ENCODE measurements at regions of chr19 and their contacts with region 1.

Region 1: DNA sequence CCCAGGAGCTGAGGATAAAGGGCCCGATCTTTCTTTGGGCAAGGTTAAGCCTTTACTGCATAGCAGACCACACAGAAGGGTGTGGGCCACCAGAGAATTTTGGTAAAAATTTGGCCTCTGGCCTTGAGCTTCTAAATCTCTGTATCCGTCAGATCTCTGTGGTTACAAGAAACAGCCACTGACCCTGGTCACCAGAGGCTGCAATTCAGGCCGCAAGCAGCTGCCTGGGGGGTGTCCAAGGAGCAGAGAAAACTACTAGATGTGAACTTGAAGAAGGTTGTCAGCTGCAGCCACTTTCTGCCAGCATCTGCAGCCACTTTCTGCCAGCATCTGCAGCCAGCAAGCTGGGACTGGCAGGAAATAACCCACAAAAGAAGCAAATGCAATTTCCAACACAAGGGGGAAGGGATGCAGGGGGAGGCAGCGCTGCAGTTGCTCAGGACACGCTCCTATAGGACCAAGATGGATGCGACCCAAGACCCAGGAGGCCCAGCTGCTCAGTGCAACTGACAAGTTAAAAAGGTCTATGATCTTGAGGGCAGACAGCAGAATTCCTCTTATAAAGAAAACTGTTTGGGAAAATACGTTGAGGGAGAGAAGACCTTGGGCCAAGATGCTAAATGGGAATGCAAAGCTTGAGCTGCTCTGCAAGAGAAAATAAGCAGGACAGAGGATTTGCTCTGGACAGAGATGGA is 8.4 kb upstream of the CEACAM19 start:
- DNase-seq: no peak
- H3K4me3 Mint-ChIP-seq: no peak overlapping the region
- H3K27ac Mint-ChIP-seq: no peak overlapping the region
- H3K4me1 Mint-ChIP-seq: no peaks in the 10 kb centered on the region
- H3K27me3 Mint-ChIP-seq: no peaks in the 10 kb centered on the region
- CTCF ChIP-seq: no peak

Region 2: DNA sequence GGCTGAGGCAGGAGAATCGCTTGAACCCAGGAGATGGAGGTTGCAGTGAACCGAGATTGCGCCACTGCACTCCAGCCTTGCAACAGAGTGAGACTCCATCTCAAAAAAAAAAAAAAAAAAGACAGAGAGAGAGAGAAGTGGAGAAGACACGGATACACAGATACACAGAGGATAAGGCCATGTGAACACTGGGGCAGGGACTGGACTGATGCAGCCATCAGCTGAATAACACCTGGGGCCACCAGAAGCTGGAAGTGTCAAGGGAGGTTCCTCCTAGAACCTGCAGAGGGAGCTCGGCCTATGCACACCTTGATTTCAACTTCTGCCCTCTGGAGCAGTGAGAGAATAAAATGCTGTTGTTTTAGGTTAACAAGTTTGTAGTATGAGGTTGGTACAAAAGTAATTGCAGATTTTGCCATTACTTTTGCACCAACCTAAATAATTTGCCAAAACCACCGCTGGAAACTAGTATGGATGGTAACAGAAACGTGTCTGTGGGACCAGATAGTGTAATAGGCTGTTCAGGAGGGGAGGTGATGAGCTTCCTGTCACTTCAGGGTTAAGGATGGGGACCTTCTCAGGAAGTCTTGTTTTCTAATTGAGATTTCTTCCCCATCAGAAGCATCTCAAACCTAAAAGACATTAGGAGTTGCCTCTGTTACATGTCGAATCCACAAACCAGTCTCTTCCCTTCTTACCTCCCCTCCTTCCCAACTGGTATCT is 85.8 kb before region 1 on chr19:
- CTCF ChIA-PET with region 1: interaction called, 82 read pairs
- POLR2A ChIA-PET with region 1: no interaction called
- intact Hi-C with region 1: no loop called
- DNase-seq: peak; percentile 78
- H3K4me3 Mint-ChIP-seq: no peak overlapping the region
- H3K27ac Mint-ChIP-seq: no peak overlapping the region
- H3K4me1 Mint-ChIP-seq: no peaks in the 10 kb centered on the region
- H3K27me3 Mint-ChIP-seq: no peaks in the 10 kb centered on the region
- CTCF ChIP-seq: peak; percentile 61